ENCODE measurements at regions of chr7 and their contacts with region 1.

Region 1: DNA sequence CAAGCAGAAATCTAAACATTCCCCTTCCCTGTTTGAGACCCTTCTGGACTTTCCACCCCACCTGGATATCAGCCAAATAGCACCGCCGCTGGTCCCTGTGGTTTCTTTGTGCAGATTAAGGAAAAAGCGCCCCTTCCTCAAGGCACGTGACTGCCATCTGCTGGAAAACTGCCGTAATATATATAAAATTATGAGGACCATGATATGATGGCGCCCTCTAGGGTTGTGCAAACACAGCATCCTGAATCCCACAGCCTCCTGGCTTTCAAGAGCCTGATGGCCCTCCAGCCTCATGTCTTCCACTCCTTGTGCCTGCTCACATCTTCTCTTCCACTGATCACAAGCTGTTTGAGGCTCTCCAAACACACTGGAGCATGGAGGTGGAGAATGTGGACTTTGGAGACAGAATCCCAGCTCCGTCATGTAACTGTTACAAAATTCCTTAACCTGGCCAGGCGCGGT is 121.3 kb downstream of the MYL10 start:
- DNase-seq: peak; percentile 80
- H3K4me3 Mint-ChIP-seq: peak overlapping the region; percentile 42
- H3K27ac Mint-ChIP-seq: no peak overlapping the region
- H3K4me1 Mint-ChIP-seq: peaks cover 3% of the 10 kb centered on the region
- H3K27me3 Mint-ChIP-seq: peaks cover 8% of the 10 kb centered on the region

Region 2: DNA sequence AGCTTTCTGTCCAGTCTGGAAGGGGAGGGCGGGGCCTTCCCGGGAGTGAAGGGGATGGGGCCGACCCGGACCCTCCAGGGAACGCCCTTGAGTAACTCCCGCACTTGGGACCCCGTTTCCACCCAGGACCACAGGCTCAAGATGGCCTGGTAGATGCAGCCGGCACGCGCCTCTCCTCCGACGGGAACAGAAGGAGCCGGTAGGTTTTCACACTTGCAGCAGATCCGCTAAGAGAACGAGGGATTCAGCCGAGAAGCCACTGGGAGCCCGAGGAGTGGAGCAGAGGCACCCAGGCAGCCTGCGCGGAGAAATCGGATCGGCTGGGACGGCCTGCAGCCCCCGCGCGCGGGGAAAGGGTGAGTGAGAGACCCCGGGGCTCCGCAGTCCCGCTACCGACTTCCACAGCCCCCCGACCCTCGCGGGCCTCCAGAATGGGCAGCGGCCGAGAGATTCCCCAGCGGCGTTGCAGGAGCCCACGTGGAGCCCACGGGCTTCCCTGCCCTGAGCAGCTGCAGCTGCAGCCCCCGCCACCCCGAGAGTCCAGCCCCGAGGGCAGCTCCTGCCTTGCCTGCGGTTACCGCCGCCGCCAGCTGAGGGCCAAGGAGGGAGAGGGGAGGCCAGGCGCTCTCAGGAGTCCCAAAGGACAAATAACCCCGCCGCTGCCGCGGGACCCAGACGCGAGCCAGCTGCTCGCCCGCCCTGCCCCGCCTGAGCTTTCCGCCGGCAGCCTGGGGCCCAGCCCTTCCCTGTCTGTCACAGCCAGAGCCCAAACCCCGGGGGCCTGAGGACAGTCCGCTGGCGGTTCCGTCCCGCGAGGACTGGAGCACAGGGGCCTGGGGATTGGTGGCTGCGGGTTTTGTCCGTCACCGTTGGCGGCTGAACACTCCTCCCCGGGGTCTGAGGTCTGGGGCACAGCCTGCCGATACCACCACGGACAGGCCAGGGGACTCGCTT is 208.0 kb before region 1 on chr7:
- CTCF ChIA-PET with region 1: no interaction called
- intact Hi-C with region 1: loop called (anchors 10 kb)
- DNase-seq: no peak
- H3K4me3 Mint-ChIP-seq: no peak overlapping the region
- H3K27ac Mint-ChIP-seq: no peak overlapping the region
- H3K4me1 Mint-ChIP-seq: peaks cover 7% of the 10 kb centered on the region
- H3K27me3 Mint-ChIP-seq: peaks cover 53% of the 10 kb centered on the region

Region 3: GRCh38 chr7:101321491-101322401 is 186.1 kb before region 1 on chr7 and contains the start of gene IFT22:
- CTCF ChIA-PET with region 1: no interaction called
- intact Hi-C with region 1: loop called (anchors 1 kb)
- DNase-seq: peak; percentile 92
- H3K4me3 Mint-ChIP-seq: peak within 1 kb of the TSS; percentile 86
- H3K27ac Mint-ChIP-seq: peak within 1 kb of the TSS; percentile 76
- H3K4me1 Mint-ChIP-seq: peaks cover 6% of the 10 kb centered on the region
- H3K27me3 Mint-ChIP-seq: no peaks in the 10 kb centered on the region
- total RNA-seq, gene IFT22: 5.4 to 6.8 TPM

Region 4: GRCh38 chr7:101363734-101364374 is 144.0 kb before region 1 on chr7:
- CTCF ChIA-PET with region 1: interaction called, 19 read pairs
- intact Hi-C with region 1: loop called (anchors 1 kb)
- DNase-seq: peak; percentile 76
- H3K4me3 Mint-ChIP-seq: no peak overlapping the region
- H3K27ac Mint-ChIP-seq: no peak overlapping the region
- H3K4me1 Mint-ChIP-seq: peaks cover 3% of the 10 kb centered on the region
- H3K27me3 Mint-ChIP-seq: peaks cover 12% of the 10 kb centered on the region

Region 5: DNA sequence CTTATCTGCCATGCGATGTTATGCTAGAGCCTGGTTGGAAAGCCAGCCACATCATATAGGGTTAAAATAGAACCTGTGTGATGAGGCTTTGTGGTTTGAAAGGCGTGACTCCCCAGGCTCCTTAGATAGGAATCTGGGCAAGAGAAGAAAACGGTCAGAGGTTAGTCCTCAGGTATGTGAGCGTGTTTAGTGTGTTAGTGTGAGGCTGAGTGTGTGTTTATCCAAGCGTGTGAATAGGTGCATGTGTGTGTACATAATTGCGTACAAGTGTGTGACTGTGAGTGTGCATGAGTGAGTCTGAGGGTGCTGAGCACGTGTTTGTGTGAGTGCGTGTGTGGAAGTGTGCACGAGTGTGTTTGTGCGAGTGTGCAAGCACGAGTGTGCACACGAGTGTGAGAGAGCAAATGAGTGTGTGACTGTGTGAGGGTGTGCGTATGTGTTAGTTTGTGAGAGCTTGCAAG is 65.3 kb before region 1 on chr7:
- CTCF ChIA-PET with region 1: interaction called, 3 read pairs
- intact Hi-C with region 1: loop called (anchors 5 kb)
- DNase-seq: no peak
- H3K4me3 Mint-ChIP-seq: no peak overlapping the region
- H3K27ac Mint-ChIP-seq: no peak overlapping the region
- H3K4me1 Mint-ChIP-seq: peaks cover 9% of the 10 kb centered on the region
- H3K27me3 Mint-ChIP-seq: peaks cover 6% of the 10 kb centered on the region

Region 6: DNA sequence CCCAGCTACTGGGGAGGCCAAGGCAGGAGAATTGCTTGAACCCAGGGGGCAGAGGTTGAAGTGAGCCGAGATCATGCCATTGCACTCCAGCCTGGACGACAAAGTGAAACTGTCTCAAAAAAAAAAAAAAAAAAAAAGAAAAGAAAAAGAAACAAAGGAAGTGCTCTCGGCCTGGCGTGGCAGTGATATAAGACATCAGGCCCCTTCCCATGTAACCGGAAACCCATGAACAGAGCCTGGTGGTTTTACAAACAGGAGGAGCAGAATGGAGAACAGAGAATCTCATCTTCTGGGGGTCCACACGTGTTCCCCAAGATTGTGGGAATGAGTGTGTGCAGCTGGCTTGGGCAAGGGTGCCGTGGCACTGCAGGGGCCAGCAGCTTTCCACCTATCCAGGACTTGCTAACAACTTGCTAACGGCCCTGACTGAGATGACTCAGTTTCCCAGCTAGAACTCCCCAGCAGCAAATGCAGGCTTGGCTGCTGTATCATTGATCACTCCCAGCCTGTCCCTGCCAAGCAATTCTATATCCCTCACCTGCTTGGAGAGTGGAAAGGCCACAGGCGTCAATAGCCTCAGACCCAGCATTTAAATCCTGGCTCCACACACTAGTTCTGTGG is 42.1 kb before region 1 on chr7:
- CTCF ChIA-PET with region 1: interaction called, 7 read pairs
- intact Hi-C with region 1: loop called (anchors 5 kb)
- DNase-seq: peak; percentile 37
- H3K4me3 Mint-ChIP-seq: no peak overlapping the region
- H3K27ac Mint-ChIP-seq: no peak overlapping the region
- H3K4me1 Mint-ChIP-seq: peaks cover 12% of the 10 kb centered on the region
- H3K27me3 Mint-ChIP-seq: no peaks in the 10 kb centered on the region